ENCODE measurements at regions of chr20 and their contacts with region 1.

Region 1: GRCh38 chr20:45469336-45470261 is at the start of gene WFDC2:
- DNase-seq: no peak
- H3K4me3 ChIP-seq: peak within 1 kb of the TSS; percentile 31 to 70 (median 52)
- H3K27ac ChIP-seq: peak within 1 kb of the TSS; percentile 54 to 77 (median 68)
- H3K4me1 ChIP-seq: peaks cover 17 to 22% (median 19%) of the 10 kb centered on the region in 3 donors
- H3K27me3 ChIP-seq: peaks cover 0 to 80% (median 3%) of the 10 kb centered on the region in 4 donors
- CTCF ChIP-seq: no peak
- POLR2A ChIP-seq: no peak
- total RNA-seq, gene WFDC2: 0.99 to 37.7 TPM in 2 of 4 donors, not detected in the others

Region 2: GRCh38 chr20:45373353-45374100 is 96.1 kb before region 1 on chr20:
- intact Hi-C with region 1: no loop called
- DNase-seq: no peak
- H3K4me3 ChIP-seq: peak overlapping the region; percentile 29 to 65 (median 51)
- H3K27ac ChIP-seq: peak overlapping the region; percentile 66 to 79 (median 73)
- H3K4me1 ChIP-seq: peaks cover 6 to 24% (median 13%) of the 10 kb centered on the region in 3 donors
- H3K27me3 ChIP-seq: no peaks in the 10 kb centered on the region
- CTCF ChIP-seq: peak; percentile 75 to 93 (median 86)
- POLR2A ChIP-seq: no peak

Region 3: DNA sequence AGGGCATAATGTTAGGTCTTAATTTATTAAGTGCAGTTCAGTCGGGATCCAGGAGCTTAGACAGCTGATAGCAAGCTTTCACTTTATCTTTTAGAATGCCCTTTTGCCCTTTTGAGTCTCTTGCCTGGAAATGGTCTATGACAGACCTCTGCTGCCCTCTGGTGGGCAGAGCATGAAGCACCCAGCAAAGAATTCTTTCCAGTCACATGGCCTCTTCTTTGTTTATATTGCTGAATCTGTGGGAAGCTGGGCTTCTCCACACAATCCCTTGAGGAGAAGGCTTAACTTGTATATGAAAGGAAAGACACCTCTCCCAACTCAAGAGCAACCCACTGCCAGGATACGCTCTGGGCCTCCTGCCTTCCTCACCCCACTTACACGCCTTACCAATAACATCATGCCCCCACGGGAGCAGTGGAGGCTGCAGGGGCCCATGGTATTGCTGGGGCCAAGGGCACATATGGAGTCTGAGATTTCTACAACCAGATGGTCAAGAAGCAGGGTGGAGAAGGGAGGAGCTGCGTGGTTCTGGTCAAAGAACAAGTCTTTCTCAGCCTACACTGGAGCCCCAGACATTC is 301.7 kb after region 1 on chr20:
- intact Hi-C with region 1: loop called (anchors 10 kb)
- DNase-seq: no peak
- H3K4me3 ChIP-seq: no peak overlapping the region
- H3K27ac ChIP-seq: peak overlapping the region in 3 of 4 donors; percentile 62 to 69 (median 64)
- H3K4me1 ChIP-seq: peaks cover 4 to 30% (median 5%) of the 10 kb centered on the region in 3 donors
- H3K27me3 ChIP-seq: no peaks in the 10 kb centered on the region
- CTCF ChIP-seq: peak; percentile 91 to 97 (median 96)
- POLR2A ChIP-seq: no peak